Aorta (tissue), 5 donors: ENCODE measurements at regions of chr7 and their contacts with region 1.

Region 1: GRCh38 chr7:64618785-64619456 is 47.0 kb upstream of the ZNF107 start:
- DNase-seq: no peak
- ATAC-seq: peak; percentile 75
- H3K4me3 ChIP-seq: no peak overlapping the region
- H3K27ac ChIP-seq: no peak overlapping the region
- H3K4me1 ChIP-seq: no peaks in the 10 kb centered on the region
- H3K27me3 ChIP-seq: no peaks in the 10 kb centered on the region

Region 2: GRCh38 chr7:64183126-64183742 is 435.7 kb before region 1 on chr7:
- intact Hi-C with region 1: loop called (anchors 2 to 5 kb)
- DNase-seq: no peak
- ATAC-seq: peak; percentile 45
- H3K4me3 ChIP-seq: no peak overlapping the region
- H3K27ac ChIP-seq: no peak overlapping the region
- H3K4me1 ChIP-seq: no peaks in the 10 kb centered on the region
- H3K27me3 ChIP-seq: no peaks in the 10 kb centered on the region

Region 3: GRCh38 chr7:64313740-64314491 is 305.0 kb before region 1 on chr7 and contains the start of gene ZNF736:
- intact Hi-C with region 1: loop called in 1 of 2 experiments (anchors 5 kb)
- DNase-seq: peak; percentile 94 to 95
- ATAC-seq: peak; percentile 97
- H3K4me3 ChIP-seq: peak within 1 kb of the TSS; percentile 89 to 97
- H3K27ac ChIP-seq: peak within 1 kb of the TSS in 1 of 2 donors; percentile 55
- H3K4me1 ChIP-seq: peaks cover 3% of the 10 kb centered on the region in 2 donors
- H3K27me3 ChIP-seq: no peaks in the 10 kb centered on the region
- total RNA-seq, gene ZNF736: 16.0 to 21.4 TPM

Region 4: DNA sequence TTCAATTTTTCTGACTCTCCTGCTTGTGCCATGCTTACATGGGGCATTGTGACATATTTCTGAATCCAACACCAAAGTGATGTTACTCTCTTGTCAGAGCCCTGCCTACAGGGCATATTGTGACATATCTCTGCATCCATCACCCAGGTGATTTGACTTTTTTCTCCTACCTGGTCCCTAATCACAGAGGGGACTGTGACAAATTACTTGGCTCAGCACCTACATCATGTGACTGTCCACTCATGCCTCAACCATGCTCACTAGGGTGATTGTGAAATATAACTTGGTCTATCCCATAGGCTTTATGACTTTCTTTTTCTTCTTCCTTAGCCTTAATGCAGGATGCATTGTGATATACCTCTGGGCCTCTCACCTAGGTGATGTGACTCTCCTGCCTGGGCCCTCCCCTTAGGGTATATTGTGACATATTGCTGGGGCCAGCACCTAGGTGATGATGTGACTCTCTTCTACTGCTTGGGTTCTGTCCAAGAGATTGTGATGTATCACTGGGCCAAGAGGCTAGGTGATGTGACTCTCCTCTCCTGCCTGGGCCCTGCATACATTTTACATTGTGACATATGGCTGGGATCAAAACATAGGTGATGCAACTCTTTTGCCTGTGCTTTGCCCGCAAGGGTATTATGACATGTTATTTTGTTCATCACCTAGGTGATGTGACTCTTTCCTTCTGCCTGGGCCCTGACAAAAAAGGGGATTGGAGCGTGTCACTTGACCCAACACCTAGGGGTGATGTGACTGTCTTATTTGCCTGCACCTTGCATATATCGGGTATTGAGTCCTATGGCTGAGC is 32.3 kb after region 1 on chr7:
- intact Hi-C with region 1: no loop called
- DNase-seq: no peak
- ATAC-seq: no peak
- H3K4me3 ChIP-seq: no peak overlapping the region
- H3K27ac ChIP-seq: no peak overlapping the region
- H3K4me1 ChIP-seq: no peaks in the 10 kb centered on the region
- H3K27me3 ChIP-seq: no peaks in the 10 kb centered on the region